ENCODE measurements at regions of chr17 and their contacts with region 1.

Region 1: DNA sequence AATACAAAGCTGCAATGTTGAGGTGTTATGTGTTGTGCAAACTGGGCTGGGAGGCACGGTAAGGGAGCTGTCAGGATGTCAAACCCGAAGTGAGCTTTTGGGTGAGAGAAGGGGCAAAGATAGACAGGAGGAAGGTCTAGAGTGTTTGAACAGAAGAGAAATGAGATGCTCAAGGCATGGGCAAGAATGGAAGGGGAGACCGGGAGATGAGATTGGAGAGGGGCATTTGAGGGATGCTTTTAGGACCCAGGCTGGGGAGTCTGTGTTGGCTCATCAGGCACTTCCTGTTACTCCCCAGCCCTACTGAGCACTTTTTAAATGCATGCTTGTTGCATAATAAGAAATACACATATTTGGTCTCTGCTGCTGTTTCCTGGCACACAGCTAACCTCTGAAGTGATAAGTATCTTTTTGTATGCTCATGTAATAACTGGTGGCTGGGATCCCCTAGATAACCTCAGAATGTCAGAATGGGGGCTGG is 13.7 kb downstream of the UNC45B start:
- DNase-seq: no peak
- ATAC-seq: no peak

Region 2: GRCh38 chr17:35171834-35172233 is 10.5 kb after region 1 on chr17:
- intact Hi-C with region 1: no loop called
- DNase-seq: no peak
- ATAC-seq: no peak

Region 3: DNA sequence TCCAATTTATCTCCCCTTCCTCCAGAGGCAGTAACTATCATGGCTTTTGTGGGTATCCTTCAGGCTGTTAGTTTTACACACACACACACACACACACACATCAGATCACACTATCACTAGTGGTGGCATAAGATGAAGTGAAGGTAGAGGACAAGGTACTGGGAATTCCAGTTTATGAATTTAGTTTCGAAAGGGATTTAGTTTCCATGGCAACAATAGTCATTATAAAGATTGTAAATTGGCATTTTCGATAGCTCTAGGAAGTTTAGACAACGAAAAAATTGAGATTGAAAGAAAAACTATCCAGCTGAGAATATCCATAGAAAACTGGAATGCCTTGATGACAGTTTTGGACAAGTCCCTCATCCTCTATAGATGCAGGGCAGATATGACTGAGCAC is 112.4 kb after region 1 on chr17:
- intact Hi-C with region 1: no loop called
- DNase-seq: no peak
- ATAC-seq: no peak

Region 4: GRCh38 chr17:35537601-35538141 is 376.4 kb after region 1 on chr17 and contains the start of gene SLFN12L:
- intact Hi-C with region 1: loop called in 1 of 2 experiments (anchors 10 kb)
- DNase-seq: no peak
- ATAC-seq: no peak
- total RNA-seq, gene SLFN12L: 1.3 to 2.0 TPM

Measured in left colon (tissue), 2 donors.